Caco-2 (cell line): ENCODE measurements at regions of chr2 and their contacts with region 1.

Region 1: GRCh38 chr2:74052732-74053597 is 68.3 kb downstream of the TET3 start:
- DNase-seq: no peak
- H3K4me3 ChIP-seq: no peak overlapping the region
- H3K4me3 Mint-ChIP-seq: no peak overlapping the region
- H3K27ac Mint-ChIP-seq: no peak overlapping the region
- H3K4me1 ChIP-seq: peaks cover 6% of the 10 kb centered on the region; the same call in 1 of the 2 replicates
- H3K4me1 Mint-ChIP-seq: peaks cover 16% of the 10 kb centered on the region
- H3K27me3 ChIP-seq: no peaks in the 10 kb centered on the region
- H3K27me3 Mint-ChIP-seq: no peaks in the 10 kb centered on the region
- CTCF ChIP-seq: no peak

Region 2: DNA sequence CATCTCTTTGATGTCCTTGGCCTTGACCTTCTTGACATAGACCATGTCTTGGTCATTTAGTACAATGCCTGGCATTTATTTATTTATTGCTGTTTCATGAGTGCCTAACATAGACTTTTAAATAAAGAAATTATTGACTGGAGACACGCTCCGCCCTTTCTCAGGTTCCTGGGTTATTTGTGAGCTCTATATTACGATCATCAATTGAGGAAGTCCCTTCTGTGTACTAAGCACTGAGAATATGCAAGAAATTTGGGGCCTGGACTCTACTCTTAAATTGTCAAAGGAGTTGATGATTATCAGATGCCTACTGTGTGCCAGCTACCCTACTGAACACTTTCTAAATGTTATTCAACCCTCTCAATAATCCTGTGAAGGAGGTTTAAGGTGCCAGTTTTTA is 87.9 kb before region 1 on chr2:
- CTCF ChIA-PET with region 1: no interaction called
- POLR2A ChIA-PET with region 1: interaction called, 11 read pairs
- intact Hi-C with region 1: no loop called
- DNase-seq: no peak
- H3K4me3 ChIP-seq: no peak overlapping the region
- H3K4me3 Mint-ChIP-seq: no peak overlapping the region
- H3K27ac Mint-ChIP-seq: no peak overlapping the region
- H3K4me1 ChIP-seq: peaks cover 12% of the 10 kb centered on the region
- H3K4me1 Mint-ChIP-seq: no peaks in the 10 kb centered on the region
- H3K27me3 ChIP-seq: no peaks in the 10 kb centered on the region
- H3K27me3 Mint-ChIP-seq: peaks cover 3% of the 10 kb centered on the region
- CTCF ChIP-seq: no peak

Region 3: DNA sequence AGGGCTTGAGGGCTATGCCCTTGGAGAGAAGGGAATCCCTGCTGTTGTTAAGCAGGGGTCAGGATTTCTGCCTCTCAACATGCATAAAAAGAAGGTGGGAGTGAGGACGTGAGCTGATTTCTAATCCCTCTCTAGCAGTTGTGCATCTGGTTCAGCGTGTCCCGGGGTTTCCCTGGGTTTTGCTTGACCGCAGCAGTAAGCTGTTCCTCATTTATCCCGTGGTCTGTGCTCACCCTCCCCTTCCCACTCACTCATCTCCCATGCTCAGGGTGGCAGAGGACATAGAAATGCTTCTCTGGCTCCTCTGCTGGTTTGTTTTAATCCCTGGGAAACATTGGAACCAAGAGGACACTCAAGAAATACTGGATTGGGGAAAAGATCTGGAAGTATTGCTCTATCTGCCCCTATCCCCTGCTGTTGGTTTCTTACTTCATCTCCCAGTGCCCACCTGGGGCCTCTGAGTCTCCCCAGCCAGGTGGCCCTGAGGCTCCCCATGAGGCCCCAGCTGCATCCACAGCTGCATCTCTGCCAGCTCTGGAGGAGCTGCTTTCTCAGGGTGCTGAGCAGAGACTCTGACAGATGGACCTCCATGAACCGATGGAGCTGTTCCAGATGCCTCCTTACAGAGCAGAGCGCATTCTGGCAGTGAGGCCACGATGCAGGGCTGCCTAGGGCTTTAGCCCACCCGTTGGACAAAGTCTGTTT is 32.1 kb before region 1 on chr2:
- CTCF ChIA-PET with region 1: no interaction called
- POLR2A ChIA-PET with region 1: no interaction called
- intact Hi-C with region 1: no loop called
- DNase-seq: no peak
- H3K4me3 ChIP-seq: no peak overlapping the region
- H3K4me3 Mint-ChIP-seq: no peak overlapping the region
- H3K27ac Mint-ChIP-seq: no peak overlapping the region
- H3K4me1 ChIP-seq: no peaks in the 10 kb centered on the region
- H3K4me1 Mint-ChIP-seq: no peaks in the 10 kb centered on the region
- H3K27me3 ChIP-seq: no peaks in the 10 kb centered on the region
- H3K27me3 Mint-ChIP-seq: no peaks in the 10 kb centered on the region
- CTCF ChIP-seq: no peak